Ascending aorta (tissue), 2 donors: ENCODE measurements at regions of chr12 and their contacts with region 1.

Region 1: DNA sequence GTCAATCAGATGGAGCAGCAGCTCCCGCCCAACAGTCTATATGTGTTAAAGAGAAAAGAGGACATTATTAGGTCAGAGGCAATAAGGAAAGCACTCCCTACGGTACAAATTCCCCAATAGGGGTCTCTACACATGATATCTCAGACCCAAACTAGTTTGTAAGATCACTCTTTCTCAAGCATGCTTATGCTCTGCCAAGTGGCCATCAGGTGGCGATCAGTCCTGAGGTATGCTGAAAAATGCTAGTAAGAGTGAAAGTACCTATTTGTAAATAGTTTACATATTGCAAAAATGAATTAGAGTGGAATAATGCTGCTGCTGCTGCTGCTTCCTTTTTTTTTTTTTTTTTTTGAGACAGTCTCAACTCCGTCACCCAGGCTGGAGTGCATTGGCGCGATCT is 61.0 kb downstream of the CPM start:
- DNase-seq: no peak
- H3K4me3 ChIP-seq: no peak overlapping the region
- H3K27ac ChIP-seq: no peak overlapping the region
- H3K4me1 ChIP-seq: no peaks in the 10 kb centered on the region
- H3K27me3 ChIP-seq: no peaks in the 10 kb centered on the region
- CTCF ChIP-seq: no peak

Region 2: GRCh38 chr12:69068431-69068830 is 196.5 kb after region 1 on chr12:
- intact Hi-C with region 1: loop called (anchors 5 kb)
- DNase-seq: no peak
- H3K4me3 ChIP-seq: no peak overlapping the region
- H3K27ac ChIP-seq: no peak overlapping the region
- H3K4me1 ChIP-seq: no peaks in the 10 kb centered on the region
- H3K27me3 ChIP-seq: no peaks in the 10 kb centered on the region
- CTCF ChIP-seq: no peak